ENCODE measurements at regions of chr17 and their contacts with region 1.

Region 1: GRCh38 chr17:76737082-76737675 is at the start of gene SRSF2:
- DNase-seq: peak; percentile 100
- ATAC-seq: peak; percentile 74
- H3K4me3 Mint-ChIP-seq: peak within 1 kb of the TSS; percentile 99
- H3K27ac Mint-ChIP-seq: peak within 1 kb of the TSS; percentile 99
- H3K4me1 Mint-ChIP-seq: peaks cover 42% of the 10 kb centered on the region
- H3K27me3 Mint-ChIP-seq: no peaks in the 10 kb centered on the region
- total RNA-seq, gene SRSF2: 376 to 384 TPM

Region 2: GRCh38 chr17:76641501-76641900 is 95.7 kb before region 1 on chr17:
- POLR2A ChIA-PET with region 1: no interaction called
- DNase-seq: no peak
- ATAC-seq: no peak
- H3K4me3 Mint-ChIP-seq: no peak overlapping the region
- H3K27ac Mint-ChIP-seq: no peak overlapping the region
- H3K4me1 Mint-ChIP-seq: peaks cover 3% of the 10 kb centered on the region
- H3K27me3 Mint-ChIP-seq: peaks cover 15% of the 10 kb centered on the region

Region 3: DNA sequence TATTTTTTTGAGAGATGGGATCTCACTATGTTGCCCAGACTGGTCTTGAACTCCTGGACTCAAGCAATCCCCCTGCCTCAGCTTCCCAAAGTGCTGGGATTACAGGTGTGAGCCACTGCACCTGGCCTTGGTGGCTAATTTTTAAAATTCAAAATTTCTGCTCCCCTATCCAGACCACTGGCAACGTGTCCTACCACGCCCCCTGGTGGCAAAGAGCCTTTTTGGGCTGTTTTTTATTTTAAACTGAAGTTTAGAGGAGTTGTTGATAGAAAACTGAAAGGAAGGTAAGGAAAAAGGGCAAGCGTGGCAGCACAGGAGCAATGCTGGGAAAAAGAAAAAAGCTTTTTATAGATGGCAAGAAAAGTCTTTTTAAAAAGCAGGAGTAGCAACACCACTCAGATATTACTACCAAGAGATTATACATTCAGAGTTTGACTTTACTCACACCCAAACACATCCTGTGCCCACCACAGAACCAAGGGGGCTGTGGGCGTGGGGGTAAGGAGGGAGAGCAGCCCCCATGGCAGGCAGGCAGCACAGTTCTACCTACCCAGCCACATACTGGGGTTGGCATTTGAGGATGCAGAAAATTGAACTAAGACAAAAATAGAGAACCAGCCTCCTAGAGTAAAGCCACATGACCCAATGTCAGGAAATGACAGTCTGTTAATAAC is 22.2 kb before region 1 on chr17:
- POLR2A ChIA-PET with region 1: interaction called, 30 read pairs
- DNase-seq: peak; percentile 77
- ATAC-seq: no peak
- H3K4me3 Mint-ChIP-seq: peak overlapping the region; percentile 77
- H3K27ac Mint-ChIP-seq: peak overlapping the region; percentile 94
- H3K4me1 Mint-ChIP-seq: peaks cover 55% of the 10 kb centered on the region
- H3K27me3 Mint-ChIP-seq: no peaks in the 10 kb centered on the region

Region 4: DNA sequence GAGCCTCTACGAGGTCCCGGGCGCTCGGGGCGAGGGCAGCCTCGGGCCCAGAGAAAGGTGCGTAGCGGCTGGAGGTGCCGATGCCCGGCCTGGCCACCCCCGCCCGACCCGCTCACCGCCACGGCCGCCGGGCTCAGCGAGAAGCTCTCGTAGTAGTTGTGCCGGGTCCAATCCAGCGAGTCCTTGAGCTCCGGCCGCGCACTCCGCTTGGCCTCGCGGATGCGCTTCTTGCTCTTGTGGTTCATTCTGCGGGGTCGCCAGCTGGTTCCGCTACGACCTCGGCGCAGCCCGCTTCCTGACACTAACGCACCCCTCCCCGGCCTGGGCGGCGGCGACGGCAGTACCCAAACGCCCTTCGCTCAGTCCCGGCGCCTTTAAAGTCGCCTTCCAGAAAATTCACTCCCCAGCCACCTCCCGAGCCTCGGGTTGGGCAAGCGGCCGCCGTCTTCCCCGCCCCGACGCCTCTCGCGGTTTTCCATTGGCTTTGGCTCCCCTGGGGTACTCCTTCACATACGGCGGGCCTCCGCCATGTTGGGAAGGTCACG is 10.9 kb before region 1 on chr17 and contains the start of gene JMJD6:
- POLR2A ChIA-PET with region 1: interaction called, 100 read pairs
- DNase-seq: no peak
- ATAC-seq: peak; percentile 83
- H3K4me3 Mint-ChIP-seq: peak within 1 kb of the TSS; percentile 99
- H3K27ac Mint-ChIP-seq: peak within 1 kb of the TSS; percentile 99
- H3K4me1 Mint-ChIP-seq: peaks cover 38% of the 10 kb centered on the region
- H3K27me3 Mint-ChIP-seq: no peaks in the 10 kb centered on the region
- total RNA-seq, gene JMJD6: 55.0 to 58.9 TPM

Region 5: GRCh38 chr17:76747716-76748363 is 10.7 kb after region 1 on chr17:
- POLR2A ChIA-PET with region 1: interaction called, 47 read pairs
- DNase-seq: no peak
- ATAC-seq: no peak
- H3K4me3 Mint-ChIP-seq: no peak overlapping the region
- H3K27ac Mint-ChIP-seq: no peak overlapping the region
- H3K4me1 Mint-ChIP-seq: peaks cover 19% of the 10 kb centered on the region
- H3K27me3 Mint-ChIP-seq: no peaks in the 10 kb centered on the region

Region 6: DNA sequence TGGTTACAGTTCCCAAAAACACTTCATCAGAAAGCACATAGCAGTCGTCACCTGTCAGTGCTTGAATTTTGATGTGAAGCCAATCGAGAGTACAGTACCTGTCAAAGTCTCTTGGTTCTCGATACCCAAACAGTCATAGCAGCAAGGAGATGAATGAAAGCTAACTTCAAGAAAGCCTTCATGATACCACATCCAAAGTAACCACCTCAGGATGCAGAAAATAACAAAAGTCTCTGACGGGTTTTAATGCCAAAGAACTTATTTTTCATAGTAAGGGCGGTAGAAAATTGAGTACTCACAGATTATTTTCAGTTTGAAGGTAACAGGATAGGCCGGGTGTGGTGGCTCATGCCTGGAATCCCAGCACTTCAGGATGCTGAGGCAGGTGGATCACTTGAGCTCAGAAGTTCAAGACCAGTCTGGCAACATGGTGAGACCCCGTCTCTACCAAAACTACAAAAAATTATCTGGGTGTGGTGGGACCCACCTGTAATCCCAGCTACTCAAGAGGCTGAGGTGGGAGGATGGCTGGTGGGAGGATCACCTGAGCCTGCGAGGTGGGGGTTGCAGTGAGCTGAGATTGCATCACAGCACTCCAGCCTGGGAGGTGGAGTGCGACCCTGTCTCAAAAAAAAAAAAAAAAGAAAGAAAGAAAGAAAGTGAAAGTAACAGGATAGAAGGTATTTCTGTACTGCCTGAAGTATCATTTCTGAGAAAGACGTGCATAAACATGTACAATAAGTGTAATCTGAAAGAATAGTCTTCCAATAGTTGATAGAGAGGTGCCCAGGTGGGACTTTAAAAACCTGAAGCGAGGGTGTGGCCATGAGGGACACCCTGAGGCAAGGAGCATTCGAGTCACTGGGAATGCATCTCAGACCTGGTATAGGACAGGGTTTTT is 16.1 kb after region 1 on chr17:
- POLR2A ChIA-PET with region 1: interaction called, 47 read pairs
- DNase-seq: peak; percentile 42
- ATAC-seq: peak; percentile 57
- H3K4me3 Mint-ChIP-seq: peak overlapping the region; percentile 87
- H3K27ac Mint-ChIP-seq: peak overlapping the region; percentile 97
- H3K4me1 Mint-ChIP-seq: peaks cover 30% of the 10 kb centered on the region
- H3K27me3 Mint-ChIP-seq: no peaks in the 10 kb centered on the region

Region 7: GRCh38 chr17:76772842-76773525 is 35.8 kb after region 1 on chr17:
- POLR2A ChIA-PET with region 1: interaction called, 16 read pairs
- DNase-seq: peak; percentile 40
- ATAC-seq: peak; percentile 100
- H3K4me3 Mint-ChIP-seq: peak overlapping the region; percentile 86
- H3K27ac Mint-ChIP-seq: peak overlapping the region; percentile 92
- H3K4me1 Mint-ChIP-seq: peaks cover 21% of the 10 kb centered on the region
- H3K27me3 Mint-ChIP-seq: no peaks in the 10 kb centered on the region

Measured in activated naive CD8-positive, alpha-beta T cell treated with anti-CD3 and anti-CD28 coated beads, Interleukin-2, amount 10 ng/mL, durations not matched to agents 7 days and 5 days (primary cell).